Gastrocnemius medialis (tissue), 4 donors: ENCODE measurements at regions of chr2 and their contacts with region 1.

Region 1: DNA sequence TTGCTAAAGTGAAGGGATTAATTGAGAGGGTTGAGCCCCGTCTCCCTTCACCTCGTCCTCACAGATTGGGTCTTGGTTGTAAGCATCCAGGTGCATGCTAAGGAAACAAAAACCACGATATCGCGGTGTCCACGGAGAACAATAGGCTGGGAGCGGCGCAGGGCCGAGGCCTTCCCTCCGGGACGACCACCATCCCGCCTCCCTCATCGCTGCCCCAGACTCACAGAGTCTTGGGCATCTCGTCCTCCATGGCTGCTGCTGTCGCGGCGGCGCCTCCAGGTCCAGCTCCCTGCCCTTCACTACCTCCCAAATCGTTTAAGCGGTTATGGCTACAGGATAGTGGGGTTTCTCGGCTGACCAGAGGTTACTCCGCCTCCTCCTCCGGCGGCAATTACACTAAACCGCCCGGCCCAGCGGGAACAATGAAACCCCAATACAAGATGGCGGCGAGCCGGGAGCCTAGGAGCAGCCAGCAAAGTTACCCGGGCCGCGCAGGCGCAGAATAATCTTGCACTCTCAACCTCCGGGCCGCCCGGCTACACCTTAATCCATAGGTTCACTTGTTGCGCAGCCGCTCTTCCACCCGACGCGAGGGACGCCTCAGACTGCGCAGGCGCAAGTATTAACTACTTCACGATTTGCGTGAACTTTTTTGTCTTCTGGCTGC is at the start of gene TIA1:
- DNase-seq: peak; percentile 97 to 98
- ATAC-seq: peak; percentile 96 to 97
- H3K4me3 ChIP-seq: peak within 1 kb of the TSS; percentile 87 to 99 (median 92)
- H3K27ac ChIP-seq: peak within 1 kb of the TSS; percentile 94 to 99 (median 95)
- H3K4me1 ChIP-seq: peaks cover 21 to 27% of the 10 kb centered on the region in 2 donors
- H3K27me3 ChIP-seq: no peaks in the 10 kb centered on the region
- CTCF ChIP-seq: no peak
- POLR2A ChIP-seq: peak; percentile 65 to 73
- total RNA-seq, gene TIA1: 20.2 to 54.8 (median 26.6) TPM

Region 2: DNA sequence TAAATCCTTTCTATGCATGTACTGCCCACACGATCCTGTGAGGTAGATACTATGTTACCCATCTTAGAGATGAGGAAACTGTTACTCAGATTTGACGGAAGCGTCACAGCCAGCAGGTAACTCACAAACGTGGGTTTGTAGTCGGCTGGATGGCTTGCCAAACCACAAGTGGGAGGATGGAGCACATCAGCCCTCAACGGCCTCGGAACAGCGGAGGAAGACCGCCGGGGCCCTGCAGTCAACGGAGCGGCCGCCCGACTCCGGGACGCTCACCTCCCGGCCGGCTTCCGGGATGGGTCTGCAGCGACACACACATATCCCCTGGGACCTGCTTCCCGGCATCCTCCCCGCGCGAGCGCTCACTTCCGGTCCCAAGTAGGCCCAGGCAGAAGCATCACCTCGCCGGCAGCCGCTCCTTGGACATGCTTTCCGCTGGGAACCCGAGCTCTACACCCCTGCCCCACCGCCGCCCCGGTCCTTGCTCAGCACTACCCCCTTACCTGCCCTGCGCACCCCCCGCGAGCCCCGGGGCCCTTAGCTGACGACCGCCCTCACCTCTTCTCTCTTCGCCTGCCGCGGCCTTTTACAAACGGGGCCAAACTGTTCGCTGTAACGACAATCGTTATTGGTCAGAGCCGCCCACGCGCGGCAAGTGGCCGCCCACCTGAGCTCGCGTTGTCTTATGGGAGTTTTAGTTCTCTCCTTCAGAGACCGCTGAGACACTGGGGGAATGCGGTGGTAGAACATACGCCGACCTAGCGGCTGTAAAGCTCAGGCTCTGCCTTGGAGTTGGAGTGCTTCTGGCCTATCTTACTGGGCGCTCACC is 57.7 kb before region 1 on chr2 and contains the start of gene C2orf42:
- in situ Hi-C with region 1: no loop called
- intact Hi-C with region 1: loop called (anchors 1 kb)
- DNase-seq: peak; percentile 94 to 97
- ATAC-seq: peak; percentile 98
- H3K4me3 ChIP-seq: peak within 1 kb of the TSS; percentile 72 to 96 (median 88)
- H3K27ac ChIP-seq: peak within 1 kb of the TSS; percentile 92 to 99 (median 92)
- H3K4me1 ChIP-seq: peaks cover 4 to 6% of the 10 kb centered on the region in 2 donors
- H3K27me3 ChIP-seq: no peaks in the 10 kb centered on the region
- CTCF ChIP-seq: no peak
- POLR2A ChIP-seq: peak; percentile 91 to 97
- total RNA-seq, gene C2orf42: 6.3 to 10.1 (median 7.3) TPM

Region 3: GRCh38 chr2:70258532-70258874 is 10.2 kb after region 1 on chr2:
- in situ Hi-C with region 1: no loop called
- intact Hi-C with region 1: loop called (anchors 1 kb)
- DNase-seq: peak; percentile 58 to 77
- ATAC-seq: peak; percentile 36 to 37
- H3K4me3 ChIP-seq: peak overlapping the region; percentile 71 to 95 (median 78)
- H3K27ac ChIP-seq: peak overlapping the region; percentile 86 to 94 (median 92)
- H3K4me1 ChIP-seq: peaks cover 49 to 51% of the 10 kb centered on the region in 2 donors
- H3K27me3 ChIP-seq: no peaks in the 10 kb centered on the region
- CTCF ChIP-seq: no peak
- POLR2A ChIP-seq: no peak

Region 4: GRCh38 chr2:71130113-71130904 is 882.0 kb after region 1 on chr2 and contains the starts of genes MCEE and MPHOSPH10:
- in situ Hi-C with region 1: no loop called
- intact Hi-C with region 1: loop called (anchors 2 kb)
- DNase-seq: peak; percentile 83 to 86
- ATAC-seq: peak; percentile 95 to 98
- H3K4me3 ChIP-seq: peak within 1 kb of the TSS; percentile 85 to 97 (median 90)
- H3K27ac ChIP-seq: peak within 1 kb of the TSS; percentile 89 to 95 (median 93)
- H3K4me1 ChIP-seq: peaks cover 37 to 39% of the 10 kb centered on the region in 2 donors
- H3K27me3 ChIP-seq: no peaks in the 10 kb centered on the region
- CTCF ChIP-seq: no peak
- POLR2A ChIP-seq: peak; percentile 51 to 56
- total RNA-seq, gene MCEE: 10.0 to 20.2 (median 13.1) TPM
- total RNA-seq, gene MPHOSPH10: 27.8 to 49.1 (median 32.8) TPM